ENCODE measurements at regions of chr20 and their contacts with region 1.

Region 1: DNA sequence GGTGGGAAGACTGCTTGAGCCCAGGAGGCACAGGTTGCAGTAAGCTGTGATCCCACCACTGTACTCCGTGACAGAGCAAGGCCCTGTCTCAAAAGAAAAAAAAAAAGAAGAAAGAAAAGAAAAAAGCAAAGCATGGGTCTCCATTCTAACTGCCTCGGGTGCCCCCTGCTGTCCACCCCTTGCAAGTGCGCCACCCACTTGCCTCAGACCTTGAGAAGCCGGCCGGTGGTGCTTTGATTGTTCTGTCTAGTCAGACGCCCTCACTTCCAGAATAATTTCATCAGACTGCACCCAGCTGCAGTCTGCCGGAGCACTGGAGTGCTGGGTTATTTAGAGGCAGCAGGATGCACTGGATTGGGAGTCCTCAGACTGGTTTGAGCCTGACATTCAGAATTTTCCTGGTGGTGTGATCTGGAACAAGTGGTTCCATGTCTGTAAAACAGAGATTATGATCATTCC is 17.6 kb upstream of the TM9SF4 start:
- DNase-seq: peak; percentile 93
- ATAC-seq: peak; percentile 98
- H3K4me3 Mint-ChIP-seq: no peak overlapping the region
- H3K27ac Mint-ChIP-seq: no peak overlapping the region
- H3K4me1 Mint-ChIP-seq: no peaks in the 10 kb centered on the region
- H3K27me3 Mint-ChIP-seq: peaks cover 4% of the 10 kb centered on the region
- CTCF ChIP-seq: peak; percentile 97

Region 2: GRCh38 chr20:31822421-31823330 is 269.2 kb before region 1 on chr20:
- CTCF ChIA-PET with region 1: interaction called, 25 read pairs
- POLR2A ChIA-PET with region 1: no interaction called
- intact Hi-C with region 1: no loop called
- DNase-seq: peak; percentile 78
- ATAC-seq: peak; percentile 92
- H3K4me3 Mint-ChIP-seq: no peak overlapping the region
- H3K27ac Mint-ChIP-seq: no peak overlapping the region
- H3K4me1 Mint-ChIP-seq: peaks cover 2% of the 10 kb centered on the region
- H3K27me3 Mint-ChIP-seq: peaks cover 2% of the 10 kb centered on the region
- CTCF ChIP-seq: peak; percentile 99

Region 3: DNA sequence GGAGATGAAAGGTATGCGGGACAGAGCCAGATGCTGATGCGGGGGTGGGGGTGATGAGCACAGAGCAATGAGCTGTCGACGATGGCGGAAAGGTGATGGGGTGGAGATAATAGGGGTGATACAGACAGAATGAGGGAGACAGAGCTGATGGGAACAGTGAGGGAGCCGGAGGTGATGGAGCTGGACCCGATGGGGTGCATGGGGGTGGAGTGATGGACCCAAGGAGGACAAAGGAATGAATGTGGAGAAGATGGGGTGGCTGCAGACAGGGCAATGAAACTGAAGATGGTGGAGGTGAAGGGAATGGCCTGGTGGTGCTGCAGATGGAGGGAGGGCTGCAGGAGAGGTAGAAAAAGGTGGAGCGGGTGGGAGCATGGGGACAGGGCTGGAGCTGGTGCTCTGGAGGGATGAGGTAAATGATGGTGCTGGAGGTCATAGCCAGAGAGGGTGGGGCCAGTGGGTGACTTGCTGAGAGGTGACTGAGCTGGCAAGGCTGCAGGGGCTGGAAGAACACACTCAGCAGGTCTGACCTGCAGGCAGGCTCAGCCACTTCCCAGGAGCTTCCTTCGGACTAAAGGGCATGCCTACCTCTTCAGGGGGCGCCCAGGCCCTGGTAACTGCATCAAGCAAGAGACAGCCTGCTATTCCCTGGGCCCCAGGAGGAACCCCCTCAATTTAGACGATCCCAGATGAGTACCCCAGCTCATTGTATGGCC is 240.5 kb before region 1 on chr20:
- CTCF ChIA-PET with region 1: interaction called, 29 read pairs
- POLR2A ChIA-PET with region 1: no interaction called
- intact Hi-C with region 1: no loop called
- DNase-seq: no peak
- ATAC-seq: no peak
- H3K4me3 Mint-ChIP-seq: no peak overlapping the region
- H3K27ac Mint-ChIP-seq: no peak overlapping the region
- H3K4me1 Mint-ChIP-seq: no peaks in the 10 kb centered on the region
- H3K27me3 Mint-ChIP-seq: peaks cover 19% of the 10 kb centered on the region
- CTCF ChIP-seq: no peak

Region 4: DNA sequence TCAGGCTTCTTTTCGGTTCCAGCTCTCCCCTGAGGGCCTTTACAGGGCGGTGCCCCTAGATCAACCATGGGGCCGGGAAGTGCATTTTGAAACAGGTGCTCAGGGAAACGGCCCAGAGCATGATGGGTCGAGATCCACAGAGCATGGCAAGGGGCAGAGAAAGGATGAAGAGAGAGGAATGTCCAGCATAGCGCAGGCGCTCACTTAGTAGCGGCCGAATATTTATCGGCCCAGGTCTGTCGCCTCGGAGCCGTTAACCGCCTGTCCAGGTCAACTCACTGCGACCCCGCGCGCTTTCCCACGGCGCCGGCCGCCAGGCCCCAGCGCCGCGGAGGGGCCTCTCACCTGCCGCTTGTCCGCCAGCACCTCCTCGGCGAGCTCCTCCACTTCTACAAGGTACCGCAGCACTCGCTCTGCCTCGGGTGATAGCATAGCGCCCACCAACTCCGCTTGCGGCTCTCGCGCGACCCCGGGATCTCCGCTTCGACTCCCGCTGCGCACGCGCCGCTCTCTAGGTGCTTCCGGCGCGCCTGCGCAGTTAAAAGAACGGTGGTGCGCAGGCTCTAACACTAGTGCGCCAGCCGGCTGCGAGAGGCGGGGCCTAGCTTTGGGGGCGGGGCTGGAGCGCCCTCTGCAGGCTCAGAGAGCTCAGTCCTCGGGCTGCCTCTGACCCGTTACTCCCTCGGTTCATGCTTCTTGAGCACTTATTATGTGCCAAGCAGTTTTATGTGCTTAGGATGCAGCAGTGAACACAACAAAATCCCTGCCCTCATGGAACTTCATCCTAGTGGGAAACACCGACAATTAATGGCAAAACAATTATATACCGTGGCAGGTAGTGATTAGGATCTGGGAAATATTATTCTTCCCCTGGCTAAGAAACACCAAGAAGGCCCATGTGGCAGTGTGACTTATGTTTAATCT is 140.1 kb before region 1 on chr20 and contains the start of gene PDRG1:
- CTCF ChIA-PET with region 1: interaction called, 13 read pairs
- POLR2A ChIA-PET with region 1: no interaction called
- intact Hi-C with region 1: no loop called
- DNase-seq: peak; percentile 98
- ATAC-seq: peak; percentile 99
- H3K4me3 Mint-ChIP-seq: peak within 1 kb of the TSS; percentile 91
- H3K27ac Mint-ChIP-seq: peak within 1 kb of the TSS; percentile 91
- H3K4me1 Mint-ChIP-seq: peaks cover 25% of the 10 kb centered on the region
- H3K27me3 Mint-ChIP-seq: peaks cover 6% of the 10 kb centered on the region
- CTCF ChIP-seq: peak; percentile 93
- total RNA-seq, gene PDRG1: 17.7 to 18.3 TPM

Region 5: DNA sequence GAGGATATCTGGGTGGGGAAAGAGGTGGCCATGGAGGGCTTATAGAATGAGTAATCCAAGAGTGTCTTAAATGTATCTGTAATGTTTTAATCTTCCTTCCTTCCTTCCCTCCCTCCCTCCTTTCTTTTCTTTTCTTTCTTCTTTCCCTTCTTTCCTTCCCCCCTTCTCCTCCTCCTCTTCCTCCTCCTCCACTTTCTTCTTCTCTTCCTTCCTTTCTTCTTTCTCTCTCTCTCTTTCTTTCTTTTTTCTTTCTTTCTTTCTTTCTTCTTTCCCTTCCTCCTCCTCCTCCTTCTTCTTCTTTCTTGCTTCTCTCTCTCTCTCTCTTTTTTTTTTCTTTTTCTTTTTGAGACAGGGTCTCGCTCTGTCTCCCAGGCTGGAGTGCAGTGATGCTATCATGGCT is 32.7 kb before region 1 on chr20:
- CTCF ChIA-PET with region 1: no interaction called
- POLR2A ChIA-PET with region 1: no interaction called
- intact Hi-C with region 1: no loop called
- DNase-seq: no peak
- ATAC-seq: no peak
- H3K4me3 Mint-ChIP-seq: no peak overlapping the region
- H3K27ac Mint-ChIP-seq: no peak overlapping the region
- H3K4me1 Mint-ChIP-seq: peaks cover 2% of the 10 kb centered on the region
- H3K27me3 Mint-ChIP-seq: peaks cover 37% of the 10 kb centered on the region
- CTCF ChIP-seq: no peak

Region 6: GRCh38 chr20:32108814-32109391 is 17.0 kb after region 1 on chr20:
- CTCF ChIA-PET with region 1: interaction called, 15 read pairs
- POLR2A ChIA-PET with region 1: interaction called, 3 read pairs
- intact Hi-C with region 1: no loop called
- DNase-seq: no peak
- ATAC-seq: no peak
- H3K4me3 Mint-ChIP-seq: peak overlapping the region; percentile 99
- H3K27ac Mint-ChIP-seq: peak overlapping the region; percentile 100
- H3K4me1 Mint-ChIP-seq: peaks cover 33% of the 10 kb centered on the region
- H3K27me3 Mint-ChIP-seq: no peaks in the 10 kb centered on the region
- CTCF ChIP-seq: no peak

Region 7: GRCh38 chr20:32231847-32232246 is 139.9 kb after region 1 on chr20:
- CTCF ChIA-PET with region 1: no interaction called
- POLR2A ChIA-PET with region 1: no interaction called
- intact Hi-C with region 1: no loop called
- DNase-seq: peak; percentile 63
- ATAC-seq: peak; percentile 87
- H3K4me3 Mint-ChIP-seq: peak overlapping the region; percentile 54
- H3K27ac Mint-ChIP-seq: peak overlapping the region; percentile 97
- H3K4me1 Mint-ChIP-seq: peaks cover 38% of the 10 kb centered on the region
- H3K27me3 Mint-ChIP-seq: no peaks in the 10 kb centered on the region
- CTCF ChIP-seq: no peak